ENCODE measurements at regions of chr1 and their contacts with region 1.

Region 1: GRCh38 chr1:105793536-105794146 is 1262.8 kb upstream of the PRMT6 start:
- DNase-seq: peak; percentile 51
- ATAC-seq: no peak
- H3K4me3 ChIP-seq: no peak overlapping the region
- H3K27ac ChIP-seq: peak overlapping the region; percentile 29; the same call in 1 of the 2 replicates
- H3K4me1 ChIP-seq: no peaks in the 10 kb centered on the region
- H3K27me3 ChIP-seq: no peaks in the 10 kb centered on the region
- CTCF ChIP-seq: peak; percentile 73

Region 2: GRCh38 chr1:104648269-104648691 is 1145.4 kb before region 1 on chr1:
- CTCF ChIA-PET with region 1: interaction called, 3 read pairs
- POLR2A ChIA-PET with region 1: no interaction called
- in situ Hi-C with region 1: no loop called
- intact Hi-C with region 1: loop called (anchors 5 kb)
- DNase-seq: peak; percentile 0
- ATAC-seq: no peak
- H3K4me3 ChIP-seq: no peak overlapping the region
- H3K27ac ChIP-seq: no peak overlapping the region
- H3K4me1 ChIP-seq: no peaks in the 10 kb centered on the region
- H3K27me3 ChIP-seq: no peaks in the 10 kb centered on the region
- CTCF ChIP-seq: peak; percentile 54; the same call in 1 of the 2 replicates

Region 3: DNA sequence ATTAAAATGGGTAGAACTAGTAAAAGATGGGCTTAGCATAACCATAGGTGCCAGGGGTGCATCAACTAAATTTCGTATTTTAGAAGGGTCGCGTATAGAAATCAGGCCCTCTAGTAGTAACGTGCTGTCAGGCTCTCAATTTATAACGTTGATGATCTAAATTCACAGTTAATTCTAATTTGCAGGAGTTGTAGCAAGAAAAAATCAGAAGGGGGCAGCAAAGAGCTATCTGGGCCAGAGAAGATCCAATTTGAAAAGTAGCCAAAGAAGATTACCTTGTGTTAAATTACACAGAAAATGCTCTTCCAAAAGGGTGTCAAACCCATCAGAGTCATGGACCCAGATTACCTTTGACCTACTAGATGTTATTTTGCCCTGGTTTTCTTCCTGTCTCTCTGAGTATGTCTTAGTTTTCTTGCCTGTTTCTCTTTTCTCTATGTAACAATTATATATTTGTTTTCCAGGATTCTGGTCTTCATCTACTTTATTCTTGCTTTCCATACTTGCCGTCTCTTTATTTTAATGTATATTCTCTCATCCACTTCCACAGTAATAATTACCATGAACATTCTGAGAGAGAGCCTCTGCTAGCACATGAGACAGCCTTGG is 1013.1 kb before region 1 on chr1:
- CTCF ChIA-PET with region 1: no interaction called
- POLR2A ChIA-PET with region 1: no interaction called
- in situ Hi-C with region 1: no loop called
- intact Hi-C with region 1: loop called (anchors 10 kb)
- DNase-seq: peak; percentile 12
- ATAC-seq: no peak
- H3K4me3 ChIP-seq: no peak overlapping the region
- H3K27ac ChIP-seq: peak overlapping the region; percentile 17; the same call in 1 of the 2 replicates
- H3K4me1 ChIP-seq: no peaks in the 10 kb centered on the region
- H3K27me3 ChIP-seq: no peaks in the 10 kb centered on the region
- CTCF ChIP-seq: peak; percentile 73

Region 4: DNA sequence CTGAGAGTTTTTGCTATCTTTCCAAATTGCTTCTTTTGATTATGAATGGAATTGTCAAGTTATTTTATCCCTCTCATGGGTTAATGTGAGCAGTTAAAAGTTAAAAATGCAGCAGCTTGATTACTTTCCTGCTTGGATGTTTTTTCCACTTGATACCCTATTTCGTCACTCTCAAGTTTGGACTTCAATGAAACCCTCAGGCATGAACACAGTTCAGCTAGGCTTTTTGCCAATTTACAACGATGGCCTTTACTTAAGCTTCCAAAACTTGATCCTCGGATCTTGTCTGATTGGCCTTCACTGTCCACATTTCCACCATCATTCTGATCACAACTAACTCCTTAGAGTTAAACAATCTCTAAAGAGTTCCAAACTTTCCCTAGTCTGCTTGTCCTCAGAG is 510.5 kb after region 1 on chr1:
- CTCF ChIA-PET with region 1: no interaction called
- POLR2A ChIA-PET with region 1: no interaction called
- in situ Hi-C with region 1: no loop called
- intact Hi-C with region 1: no loop called
- DNase-seq: no peak
- ATAC-seq: no peak
- H3K4me3 ChIP-seq: no peak overlapping the region
- H3K27ac ChIP-seq: no peak overlapping the region
- H3K4me1 ChIP-seq: no peaks in the 10 kb centered on the region
- H3K27me3 ChIP-seq: no peaks in the 10 kb centered on the region
- CTCF ChIP-seq: no peak